Gastrocnemius medialis (tissue), 4 donors: ENCODE measurements at regions of chr10 and their contacts with region 1.

Region 1: DNA sequence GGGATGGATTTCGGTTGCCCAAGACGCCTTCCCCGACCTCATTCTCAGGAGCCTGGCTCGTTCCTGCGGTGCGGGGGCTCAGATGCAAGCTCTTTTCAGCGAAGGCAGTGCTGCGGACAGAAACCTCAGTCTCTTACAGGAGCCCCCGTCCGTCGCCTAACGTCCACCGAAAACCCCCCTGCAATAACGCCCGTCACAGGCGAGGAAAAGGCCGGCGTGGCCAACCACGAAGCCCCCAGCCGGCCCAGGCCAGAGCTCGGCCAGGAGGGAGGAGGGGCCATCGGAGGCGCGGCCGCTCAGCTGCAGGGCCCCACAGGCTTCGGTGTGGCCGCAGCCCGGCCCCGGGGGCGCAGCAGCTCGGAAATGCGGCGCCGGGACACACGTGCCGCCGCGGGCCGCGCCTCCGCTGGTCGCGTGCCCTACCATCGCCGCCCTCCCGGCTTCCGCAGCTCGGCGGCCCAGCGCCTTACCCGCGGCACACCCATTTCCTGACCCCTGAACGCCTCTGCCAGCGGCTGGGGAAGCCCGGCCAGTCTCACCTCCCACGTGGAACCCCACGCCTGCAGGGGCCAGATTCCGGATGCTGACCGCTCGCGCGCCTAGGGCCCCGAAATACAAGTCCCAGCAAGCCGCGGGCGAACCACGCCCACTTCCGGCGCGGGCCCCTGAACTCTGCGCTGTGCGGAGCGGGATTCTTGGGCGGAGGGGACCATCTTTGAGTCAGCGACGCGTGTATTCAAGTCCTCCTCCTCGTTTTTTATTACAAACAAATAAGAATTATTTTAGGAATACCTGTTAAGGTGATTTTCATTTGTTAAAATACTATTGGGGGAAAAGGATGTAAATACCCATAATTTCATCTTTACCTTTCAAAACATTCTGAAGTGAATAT is at the start of gene ZNF239:
- DNase-seq: peak; percentile 81 to 83
- ATAC-seq: peak; percentile 96 to 97
- H3K4me3 ChIP-seq: peak within 1 kb of the TSS; percentile 58 to 77 (median 72)
- H3K27ac ChIP-seq: peak within 1 kb of the TSS; percentile 62 to 78 (median 72)
- H3K4me1 ChIP-seq: peaks cover 10 to 11% of the 10 kb centered on the region in 2 donors
- H3K27me3 ChIP-seq: no peaks in the 10 kb centered on the region
- CTCF ChIP-seq: peak in 2 of 5 experiments; percentile 14 to 19
- POLR2A ChIP-seq: peak in 1 of 2 donors; percentile 16
- total RNA-seq, gene ZNF239: 2.0 to 4.3 (median 3.2) TPM

Region 2: DNA sequence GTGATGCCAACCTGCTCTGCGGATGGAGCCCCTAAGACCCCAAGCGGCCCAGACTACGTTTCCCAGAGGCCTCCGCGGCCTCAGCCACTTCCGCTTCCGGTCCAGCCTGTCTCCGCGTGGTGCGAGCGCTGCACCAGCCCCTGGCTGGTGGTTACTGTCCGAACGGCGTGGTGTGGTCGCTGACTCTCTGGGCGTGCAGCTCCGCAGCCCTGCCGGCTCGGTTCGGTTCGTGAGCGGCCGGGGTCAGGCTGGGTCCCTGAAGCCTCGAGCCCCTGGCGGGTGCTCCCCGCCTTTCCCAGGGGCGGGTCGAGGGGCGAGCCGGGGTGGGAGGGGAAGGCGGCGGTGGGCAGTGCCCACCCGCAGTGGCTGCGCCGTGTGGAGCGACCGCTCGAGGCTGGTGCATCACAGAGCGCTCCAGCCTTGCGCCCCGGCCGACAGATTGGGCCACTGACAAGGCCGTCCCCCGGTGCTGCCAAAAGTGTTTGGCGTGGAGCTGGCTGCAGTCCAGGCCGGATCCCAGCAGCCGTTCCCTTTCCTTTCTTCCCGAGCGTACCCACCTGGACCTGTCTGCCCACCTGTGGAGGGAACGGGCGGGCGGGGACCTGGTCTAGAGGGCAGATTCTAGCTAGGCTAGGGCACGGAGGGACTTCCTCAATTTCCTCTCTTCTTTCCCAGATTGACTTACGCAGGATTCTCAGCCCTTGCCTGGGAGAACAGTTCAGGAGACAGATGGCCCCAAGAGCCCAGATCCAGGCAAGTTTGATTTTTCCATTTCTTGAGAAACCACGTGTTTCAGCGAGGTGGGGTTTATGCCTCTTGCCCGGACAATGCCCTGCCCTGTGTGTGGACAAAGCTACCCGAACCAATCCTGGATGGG is 32.3 kb after region 1 on chr10 and contains the start of gene ZNF485:
- in situ Hi-C with region 1: no loop called
- intact Hi-C with region 1: loop called (anchors 1 kb)
- DNase-seq: peak; percentile 35 to 54
- ATAC-seq: peak; percentile 88 to 90
- H3K4me3 ChIP-seq: peak within 1 kb of the TSS; percentile 80 to 100 (median 83)
- H3K27ac ChIP-seq: peak within 1 kb of the TSS; percentile 75 to 92 (median 82)
- H3K4me1 ChIP-seq: peaks cover 9 to 10% of the 10 kb centered on the region in 2 donors
- H3K27me3 ChIP-seq: no peaks in the 10 kb centered on the region
- CTCF ChIP-seq: no peak
- POLR2A ChIP-seq: peak in 1 of 2 donors; percentile 28
- total RNA-seq, gene ZNF485: 2.6 to 3.7 (median 2.9) TPM

Region 3: DNA sequence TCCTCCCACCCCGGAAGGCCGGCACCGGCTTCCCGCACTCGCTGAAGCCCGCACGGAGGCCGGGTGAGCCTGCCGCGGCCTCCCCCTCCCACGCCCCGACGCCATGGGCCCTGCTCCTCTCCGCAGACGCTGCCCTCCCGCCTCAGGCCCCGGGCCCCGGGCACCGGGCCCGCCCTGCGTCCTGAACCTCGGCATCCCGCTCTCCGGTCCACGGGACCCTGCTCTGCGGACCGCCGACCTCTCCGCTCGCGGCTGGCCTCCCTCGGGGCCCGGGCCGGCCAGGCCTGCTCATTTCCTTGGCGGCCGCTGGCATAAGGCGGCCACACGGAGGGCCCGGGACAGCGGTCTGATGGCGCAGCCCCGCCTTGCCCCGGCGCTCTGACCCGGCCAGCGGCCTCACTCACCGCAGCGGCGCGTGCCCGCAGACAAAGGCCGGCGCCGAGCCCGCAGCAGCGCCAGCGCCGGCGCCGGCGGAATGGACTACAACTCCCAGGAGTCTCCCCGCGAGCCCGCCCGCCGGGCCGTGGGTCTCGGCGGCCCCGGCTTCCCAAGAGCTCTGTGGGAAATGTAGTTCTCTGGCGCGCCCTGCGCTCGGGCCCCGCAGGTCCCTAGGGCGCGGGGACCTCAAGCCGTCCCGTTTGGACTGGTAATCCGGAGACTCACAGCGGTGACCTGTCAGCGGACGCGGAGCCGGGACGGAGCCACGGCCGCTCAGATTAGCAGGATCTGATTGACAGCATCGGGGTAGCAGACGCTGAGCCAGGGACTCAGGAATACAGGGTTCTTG is 74.3 kb after region 1 on chr10 and contains the start of gene ZNF32:
- in situ Hi-C with region 1: no loop called
- intact Hi-C with region 1: loop called (anchors 1 kb)
- DNase-seq: peak; percentile 71 to 77
- ATAC-seq: peak; percentile 94 to 95
- H3K4me3 ChIP-seq: peak within 1 kb of the TSS; percentile 69 to 99 (median 86)
- H3K27ac ChIP-seq: peak within 1 kb of the TSS; percentile 84 to 94 (median 94)
- H3K4me1 ChIP-seq: peaks cover 10 to 15% of the 10 kb centered on the region in 2 donors
- H3K27me3 ChIP-seq: peaks cover 0 to 2% (median 0%) of the 10 kb centered on the region in 3 donors
- CTCF ChIP-seq: peak in 1 of 5 experiments; percentile 9
- POLR2A ChIP-seq: peak; percentile 56 to 61
- total RNA-seq, gene ZNF32: 38.1 to 65.5 (median 61.5) TPM